Gastrocnemius medialis (tissue), 4 donors: ENCODE measurements at regions of chr1 and their contacts with region 1.

Region 1: DNA sequence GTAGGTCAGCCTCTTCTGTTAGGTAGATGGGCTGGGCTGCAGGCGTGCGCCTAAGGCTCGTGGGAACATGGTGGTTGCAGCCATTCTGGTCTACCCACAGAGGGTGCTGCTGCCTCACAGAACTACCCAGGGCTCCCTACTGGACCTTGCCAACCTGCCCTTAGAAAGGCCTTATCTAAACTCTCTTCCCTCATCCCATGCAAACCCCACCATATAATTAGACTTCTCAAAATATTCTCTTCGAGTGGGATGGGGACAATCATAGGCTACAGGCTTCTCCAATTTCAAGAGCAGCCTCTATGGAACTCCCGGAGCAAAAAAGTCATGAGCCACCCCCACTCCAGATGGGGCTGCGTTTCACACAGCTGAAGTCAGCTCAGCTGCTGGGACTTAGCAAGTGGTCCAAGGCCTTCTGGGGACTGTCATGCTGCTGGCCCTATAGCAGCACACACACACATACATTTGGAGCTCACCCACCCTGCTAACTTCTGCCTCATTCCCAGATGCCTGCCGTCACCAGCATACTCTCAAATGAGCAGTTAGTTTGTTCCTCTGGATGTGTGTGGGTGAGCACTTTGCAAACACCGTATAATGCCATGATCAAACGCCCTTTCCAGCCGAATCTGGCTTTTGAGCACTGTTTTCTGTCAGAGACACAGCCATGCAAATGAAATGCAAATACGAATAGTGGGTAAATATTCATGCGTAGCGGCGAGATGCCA is 6.1 kb upstream of the SDHB start:
- DNase-seq: peak; percentile 54 to 69
- ATAC-seq: peak; percentile 67 to 77
- H3K4me3 ChIP-seq: no peak overlapping the region
- H3K27ac ChIP-seq: no peak overlapping the region
- H3K4me1 ChIP-seq: peaks cover 32% of the 10 kb centered on the region in 2 donors
- H3K27me3 ChIP-seq: no peaks in the 10 kb centered on the region
- CTCF ChIP-seq: peak; percentile 71 to 85 (median 80)
- POLR2A ChIP-seq: no peak

Region 2: GRCh38 chr1:17098446-17099251 is 38.7 kb after region 1 on chr1:
- in situ Hi-C with region 1: no loop called
- intact Hi-C with region 1: loop called (anchors 2 kb)
- DNase-seq: peak; percentile 98 to 100
- ATAC-seq: peak; percentile 76 to 84
- H3K4me3 ChIP-seq: no peak overlapping the region
- H3K27ac ChIP-seq: peak overlapping the region; percentile 89 to 97 (median 96)
- H3K4me1 ChIP-seq: peaks cover 55 to 88% of the 10 kb centered on the region in 2 donors
- H3K27me3 ChIP-seq: no peaks in the 10 kb centered on the region
- CTCF ChIP-seq: no peak
- POLR2A ChIP-seq: peak in 1 of 2 donors; percentile 17

Region 3: GRCh38 chr1:17119076-17119772 is 59.3 kb after region 1 on chr1 and contains the start of gene PADI2:
- in situ Hi-C with region 1: loop called in 2 of 4 experiments (anchors 5 to 10 kb)
- intact Hi-C with region 1: no loop called
- DNase-seq: peak; percentile 63 to 83
- ATAC-seq: peak; percentile 22 to 28
- H3K4me3 ChIP-seq: peak within 1 kb of the TSS; percentile 60 to 77 (median 64)
- H3K27ac ChIP-seq: peak within 1 kb of the TSS; percentile 94 to 98 (median 96)
- H3K4me1 ChIP-seq: peaks cover 56 to 71% of the 10 kb centered on the region in 2 donors
- H3K27me3 ChIP-seq: no peaks in the 10 kb centered on the region
- CTCF ChIP-seq: no peak
- POLR2A ChIP-seq: peak; percentile 96 to 97
- total RNA-seq, gene PADI2: 156 to 176 (median 171) TPM

Region 4: GRCh38 chr1:17125756-17126237 is 65.9 kb after region 1 on chr1:
- in situ Hi-C with region 1: loop called in 2 of 4 experiments (anchors 5 to 10 kb)
- intact Hi-C with region 1: loop called (anchors 1 kb)
- DNase-seq: peak; percentile 66 to 73
- ATAC-seq: peak; percentile 19 to 35
- H3K4me3 ChIP-seq: no peak overlapping the region
- H3K27ac ChIP-seq: no peak overlapping the region
- H3K4me1 ChIP-seq: peaks cover 13 to 20% of the 10 kb centered on the region in 2 donors
- H3K27me3 ChIP-seq: no peaks in the 10 kb centered on the region
- CTCF ChIP-seq: peak; percentile 81 to 98 (median 94)
- POLR2A ChIP-seq: no peak

Region 5: GRCh38 chr1:17236779-17237560 is 177.1 kb after region 1 on chr1:
- in situ Hi-C with region 1: loop called (anchors 5 kb)
- intact Hi-C with region 1: loop called (anchors 1 kb)
- DNase-seq: peak; percentile 60 to 72
- ATAC-seq: peak; percentile 71 to 89
- H3K4me3 ChIP-seq: no peak overlapping the region
- H3K27ac ChIP-seq: no peak overlapping the region
- H3K4me1 ChIP-seq: peaks cover 0 to 9% of the 10 kb centered on the region in 2 donors
- H3K27me3 ChIP-seq: peaks cover 0 to 2% (median 0%) of the 10 kb centered on the region in 3 donors
- CTCF ChIP-seq: peak; percentile 76 to 96 (median 91)
- POLR2A ChIP-seq: no peak

Region 6: GRCh38 chr1:17335821-17336710 is 276.2 kb after region 1 on chr1:
- in situ Hi-C with region 1: no loop called
- intact Hi-C with region 1: loop called (anchors 5 kb)
- DNase-seq: no peak
- ATAC-seq: no peak
- H3K4me3 ChIP-seq: no peak overlapping the region
- H3K27ac ChIP-seq: no peak overlapping the region
- H3K4me1 ChIP-seq: no peaks in the 10 kb centered on the region
- H3K27me3 ChIP-seq: peaks cover 0 to 9% (median 4%) of the 10 kb centered on the region in 3 donors
- CTCF ChIP-seq: peak; percentile 32 to 76 (median 57)
- POLR2A ChIP-seq: no peak